Activated T-helper 1 cell treated with anti-CD3 and anti-CD28 coated beads, Interleukin-12 subunit alpha, Interleukin-12 subunit beta, Interleukin-2, Interleukin-4 antibody, amounts not matched to agents 30 ng/mL and 10 ng/mL and 1 ng/mL, durations not matched to agents 14 hours and 24 hours and 36 hours (primary cell): ENCODE measurements at regions of chr4 and their contacts with region 1.

Region 1: GRCh38 chr4:13484122-13484748 is at the start of gene RAB28:
- DNase-seq: peak; percentile 90
- H3K4me3 Mint-ChIP-seq: peak within 1 kb of the TSS; percentile 91
- H3K27ac Mint-ChIP-seq: peak within 1 kb of the TSS; percentile 96
- H3K4me1 Mint-ChIP-seq: peaks cover 26% of the 10 kb centered on the region
- H3K27me3 Mint-ChIP-seq: peaks cover 16% of the 10 kb centered on the region
- total RNA-seq, gene RAB28: 19.3 and 22.2 TPM in 2 replicates

Region 2: GRCh38 chr4:13386405-13387107 is 97.7 kb before region 1 on chr4:
- intact Hi-C with region 1: loop called (anchors 5 kb)
- DNase-seq: no peak
- H3K4me3 Mint-ChIP-seq: peak overlapping the region; percentile 10
- H3K27ac Mint-ChIP-seq: no peak overlapping the region
- H3K4me1 Mint-ChIP-seq: peaks cover 5% of the 10 kb centered on the region
- H3K27me3 Mint-ChIP-seq: no peaks in the 10 kb centered on the region

Region 3: DNA sequence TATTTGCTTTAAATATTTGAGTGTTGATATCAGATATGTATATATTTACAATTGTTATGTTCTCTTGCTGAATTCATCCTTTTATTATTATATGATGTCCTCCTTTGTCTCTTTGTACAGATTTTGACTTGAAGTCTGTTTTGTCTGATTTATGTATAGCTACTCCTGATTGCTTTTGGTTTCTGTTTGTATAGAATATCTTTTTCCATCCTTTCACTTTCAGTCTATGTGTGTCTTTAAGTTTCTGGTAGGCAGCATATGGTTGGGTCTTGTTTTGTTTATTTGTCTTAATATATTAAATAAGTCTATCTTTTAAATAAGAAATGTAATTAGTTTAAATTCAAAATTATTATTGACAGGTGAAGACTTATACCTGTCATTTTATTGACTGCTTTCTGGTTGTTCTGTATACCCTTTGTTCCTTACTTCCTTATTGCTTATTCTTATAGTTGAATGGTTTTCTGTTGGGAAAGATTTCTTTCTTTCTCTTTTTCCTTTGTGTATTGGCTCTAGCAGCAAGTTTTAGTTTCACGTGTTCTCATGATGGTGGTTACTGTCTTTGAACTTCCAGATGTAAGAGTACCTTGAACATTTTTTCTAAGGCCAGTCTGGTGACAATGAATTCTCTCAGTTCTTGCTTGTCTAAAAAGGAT is 31.2 kb before region 1 on chr4:
- intact Hi-C with region 1: loop called (anchors 1 kb)
- DNase-seq: no peak
- H3K4me3 Mint-ChIP-seq: no peak overlapping the region
- H3K27ac Mint-ChIP-seq: peak overlapping the region; percentile 80
- H3K4me1 Mint-ChIP-seq: peaks cover 18% of the 10 kb centered on the region
- H3K27me3 Mint-ChIP-seq: no peaks in the 10 kb centered on the region

Region 4: GRCh38 chr4:13627606-13628301 is 143.5 kb after region 1 on chr4 and contains the start of gene BOD1L1:
- intact Hi-C with region 1: loop called (anchors 1 kb)
- DNase-seq: peak; percentile 81
- H3K4me3 Mint-ChIP-seq: peak within 1 kb of the TSS; percentile 99
- H3K27ac Mint-ChIP-seq: peak within 1 kb of the TSS; percentile 98
- H3K4me1 Mint-ChIP-seq: peaks cover 29% of the 10 kb centered on the region
- H3K27me3 Mint-ChIP-seq: peaks cover 4% of the 10 kb centered on the region
- total RNA-seq, gene BOD1L1: 40.1 and 40.4 TPM in 2 replicates